Naive thymus-derived CD8-positive, alpha-beta T cell (primary cell): ENCODE measurements at regions of chr14 and their contacts with region 1.

Region 1: GRCh38 chr14:98912655-98913054 is 359.3 kb downstream of the BCL11B start:
- DNase-seq: peak in 6 of 10 donors; percentile 24 to 69 (median 45)
- ATAC-seq: peak; percentile 70 to 90
- H3K4me3 Mint-ChIP-seq: peak overlapping the region in 5 of 10 donors; percentile 0 to 64 (median 24)
- H3K27ac Mint-ChIP-seq: peak overlapping the region in 9 of 10 donors; percentile 9 to 84 (median 69)
- H3K4me1 Mint-ChIP-seq: peaks cover 21 to 56% (median 34%) of the 10 kb centered on the region in 4 donors
- H3K27me3 Mint-ChIP-seq: no peaks in the 10 kb centered on the region

Region 2: GRCh38 chr14:98858158-98858557 is 54.5 kb before region 1 on chr14:
- POLR2A ChIA-PET with region 1: no interaction called
- DNase-seq: no peak
- ATAC-seq: no peak
- H3K4me3 Mint-ChIP-seq: no peak overlapping the region
- H3K27ac Mint-ChIP-seq: peak overlapping the region in 1 of 10 donors; percentile 76
- H3K4me1 Mint-ChIP-seq: peaks cover 0 to 5% (median 2%) of the 10 kb centered on the region in 4 donors
- H3K27me3 Mint-ChIP-seq: peaks cover 0 to 4% (median 0%) of the 10 kb centered on the region in 5 donors

Region 3: DNA sequence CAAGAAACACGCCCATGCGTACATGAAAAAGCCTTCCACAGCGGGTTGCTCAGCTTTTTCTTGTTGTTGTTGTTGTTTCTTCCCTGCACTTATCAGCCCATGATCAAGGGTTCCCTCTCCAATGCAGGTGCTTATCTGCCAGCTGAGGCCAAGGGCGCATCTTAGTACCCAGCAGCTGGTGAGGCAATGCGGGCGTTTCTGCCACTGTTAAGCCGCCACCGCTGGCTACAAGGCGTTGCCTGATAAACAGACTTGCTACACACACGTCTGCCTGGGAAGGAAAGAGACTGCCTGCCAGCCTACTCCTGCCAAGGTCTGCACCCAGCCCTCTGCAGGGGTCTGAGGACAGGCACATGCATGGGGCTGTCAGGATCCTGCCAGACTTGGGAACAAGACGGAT is 13.5 kb after region 1 on chr14:
- POLR2A ChIA-PET with region 1: interaction called, 18 read pairs
- DNase-seq: peak; percentile 16 to 79 (median 46)
- ATAC-seq: peak; percentile 92 to 93
- H3K4me3 Mint-ChIP-seq: peak overlapping the region; percentile 65 to 89 (median 78)
- H3K27ac Mint-ChIP-seq: peak overlapping the region; percentile 86 to 98 (median 94)
- H3K4me1 Mint-ChIP-seq: peaks cover 26 to 63% (median 55%) of the 10 kb centered on the region in 4 donors
- H3K27me3 Mint-ChIP-seq: no peaks in the 10 kb centered on the region

Region 4: DNA sequence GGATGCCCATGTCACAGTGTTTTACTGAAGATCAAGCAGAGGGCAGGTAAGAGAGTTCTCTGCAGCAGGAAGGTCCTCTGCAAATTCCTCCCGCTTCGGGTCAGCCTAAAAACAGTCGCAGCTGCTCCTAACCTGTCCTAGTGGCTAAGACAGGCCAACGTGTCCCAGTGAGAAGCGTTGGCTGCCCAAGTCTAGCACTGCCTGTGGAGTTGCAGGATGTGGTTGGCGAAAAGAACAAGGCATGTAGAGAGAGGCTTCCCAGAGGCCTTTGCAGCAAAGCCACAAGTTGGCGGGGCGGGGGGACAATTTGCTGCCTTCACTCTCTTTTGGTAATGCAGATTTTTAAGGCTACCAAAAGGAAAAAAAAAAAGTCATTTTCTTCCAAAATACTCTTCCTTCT is 19.3 kb after region 1 on chr14:
- POLR2A ChIA-PET with region 1: interaction called, 18 read pairs
- DNase-seq: peak; percentile 43 to 91 (median 80)
- ATAC-seq: peak; percentile 94 to 99
- H3K4me3 Mint-ChIP-seq: peak overlapping the region; percentile 68 to 90 (median 82)
- H3K27ac Mint-ChIP-seq: peak overlapping the region; percentile 38 to 97 (median 96)
- H3K4me1 Mint-ChIP-seq: peaks cover 58 to 97% (median 92%) of the 10 kb centered on the region in 4 donors
- H3K27me3 Mint-ChIP-seq: no peaks in the 10 kb centered on the region

Region 5: DNA sequence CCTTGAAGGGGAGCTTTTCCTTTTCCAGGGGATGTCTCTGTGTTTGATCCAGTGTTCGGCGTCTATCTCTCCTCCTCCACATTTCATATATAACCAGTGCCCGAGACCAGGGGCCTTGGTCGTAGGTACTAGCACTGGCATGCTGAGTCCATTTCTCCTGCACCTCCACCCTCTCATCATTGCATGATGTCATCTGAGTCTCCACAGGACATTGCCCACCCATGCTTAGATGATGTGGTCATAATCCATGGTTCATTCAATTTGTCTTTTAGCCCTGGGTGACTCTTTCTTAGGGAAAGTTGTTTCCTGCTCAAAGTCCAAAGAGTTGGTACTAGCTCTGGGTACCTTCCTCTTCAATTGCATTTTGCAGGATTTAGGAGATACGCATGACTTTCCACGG is 31.3 kb after region 1 on chr14:
- POLR2A ChIA-PET with region 1: no interaction called
- DNase-seq: no peak
- ATAC-seq: no peak
- H3K4me3 Mint-ChIP-seq: peak overlapping the region in 1 of 10 donors; percentile 4
- H3K27ac Mint-ChIP-seq: peak overlapping the region in 2 of 10 donors; percentile 43 to 67
- H3K4me1 Mint-ChIP-seq: peaks cover 25 to 46% (median 31%) of the 10 kb centered on the region in 4 donors
- H3K27me3 Mint-ChIP-seq: no peaks in the 10 kb centered on the region

Region 6: GRCh38 chr14:100049220-100049619 is 1136.6 kb after region 1 on chr14:
- POLR2A ChIA-PET with region 1: no interaction called
- DNase-seq: no peak
- ATAC-seq: no peak
- H3K4me3 Mint-ChIP-seq: no peak overlapping the region
- H3K27ac Mint-ChIP-seq: peak overlapping the region in 4 of 10 donors; percentile 1 to 73 (median 24)
- H3K4me1 Mint-ChIP-seq: peaks cover 7 to 17% (median 11%) of the 10 kb centered on the region in 4 donors
- H3K27me3 Mint-ChIP-seq: no peaks in the 10 kb centered on the region